H1 (cell line): ENCODE measurements at regions of chr15 and their contacts with region 1.

Region 1: DNA sequence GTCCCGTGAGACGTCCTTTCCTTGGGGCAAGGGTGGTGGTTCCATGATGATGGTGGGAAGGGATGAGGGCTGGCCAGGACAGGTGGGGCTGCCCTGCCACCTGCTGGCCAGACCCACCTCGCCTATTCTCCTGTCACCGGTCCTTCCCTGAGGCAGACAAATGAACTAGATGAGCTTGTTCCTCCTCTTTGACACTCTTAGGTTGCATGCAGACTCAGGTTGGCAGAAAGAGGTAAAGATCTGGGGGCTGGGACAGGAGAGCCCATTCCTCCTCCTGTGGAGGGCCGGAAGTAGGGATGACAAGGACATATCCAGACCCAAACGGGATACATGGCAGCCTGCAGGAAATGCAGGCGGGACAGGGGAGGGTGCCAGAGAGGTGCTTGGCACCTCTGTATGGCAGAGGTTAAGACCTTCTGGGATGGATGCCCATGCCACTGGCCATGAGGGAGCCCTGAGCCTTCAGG is 38.6 kb downstream of the ACSBG1 start:
- DNase-seq: peak in 1 of 2 experiments; percentile 61
- H3K4me3 ChIP-seq: no peak overlapping the region
- H3K27ac ChIP-seq: no peak overlapping the region
- H3K4me1 ChIP-seq: no peaks in the 10 kb centered on the region
- H3K27me3 ChIP-seq: no peaks in the 10 kb centered on the region
- CTCF ChIP-seq: peak; percentile 87 to 93 (median 90)
- EP300 ChIP-seq: no peak
- POLR2A ChIP-seq: no peak
- RAD21 ChIP-seq: peak; percentile 86 to 87

Region 2: DNA sequence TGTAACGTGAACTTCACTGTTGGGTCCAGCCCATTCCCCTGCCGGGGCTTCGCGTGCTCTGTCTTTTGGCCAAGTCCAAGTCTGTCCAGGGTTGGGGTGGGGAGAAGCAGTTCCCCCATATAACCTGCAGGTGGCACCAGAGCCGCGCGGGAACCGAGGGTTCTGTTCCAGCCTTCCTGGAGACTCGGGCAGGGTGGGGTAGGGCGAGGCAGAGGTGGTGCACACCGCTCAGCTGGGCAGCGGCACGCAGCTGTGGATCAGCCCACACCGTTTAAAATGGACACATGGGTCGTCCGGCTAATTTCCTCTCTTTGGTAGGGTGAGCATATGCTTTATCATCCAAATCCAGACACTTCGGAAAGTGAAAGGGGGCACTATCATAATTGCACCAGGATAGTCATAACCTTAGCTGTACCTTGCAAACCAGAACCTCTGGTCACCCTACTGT is 236.3 kb before region 1 on chr15:
- CTCF ChIA-PET with region 1: interaction called, 10 read pairs
- POLR2A ChIA-PET with region 1: no interaction called
- DNase-seq: peak; percentile 58 to 99
- H3K4me3 ChIP-seq: no peak overlapping the region
- H3K27ac ChIP-seq: no peak overlapping the region
- H3K4me1 ChIP-seq: peaks cover 0 to 5% (median 1%) of the 10 kb centered on the region in 4 experiments; a peak in 4 of 7 replicates
- H3K27me3 ChIP-seq: no peaks in the 10 kb centered on the region; a peak in 1 of 7 replicates
- CTCF ChIP-seq: peak; percentile 90 to 97 (median 97)
- EP300 ChIP-seq: no peak
- POLR2A ChIP-seq: no peak
- RAD21 ChIP-seq: peak; percentile 97 to 98

Region 3: GRCh38 chr15:78000091-78000926 is 195.5 kb before region 1 on chr15:
- CTCF ChIA-PET with region 1: interaction called, 16 read pairs
- POLR2A ChIA-PET with region 1: no interaction called
- DNase-seq: peak; percentile 85 to 96
- H3K4me3 ChIP-seq: no peak overlapping the region
- H3K27ac ChIP-seq: no peak overlapping the region
- H3K4me1 ChIP-seq: peaks cover 0 to 4% (median 0%) of the 10 kb centered on the region in 4 experiments; a peak in 2 of 7 replicates
- H3K27me3 ChIP-seq: no peaks in the 10 kb centered on the region
- CTCF ChIP-seq: peak; percentile 89 to 98 (median 93)
- EP300 ChIP-seq: peak in 1 of 2 experiments; percentile 46; a peak in 1 of 3 replicates
- POLR2A ChIP-seq: no peak
- RAD21 ChIP-seq: peak; percentile 97 to 98

Region 4: DNA sequence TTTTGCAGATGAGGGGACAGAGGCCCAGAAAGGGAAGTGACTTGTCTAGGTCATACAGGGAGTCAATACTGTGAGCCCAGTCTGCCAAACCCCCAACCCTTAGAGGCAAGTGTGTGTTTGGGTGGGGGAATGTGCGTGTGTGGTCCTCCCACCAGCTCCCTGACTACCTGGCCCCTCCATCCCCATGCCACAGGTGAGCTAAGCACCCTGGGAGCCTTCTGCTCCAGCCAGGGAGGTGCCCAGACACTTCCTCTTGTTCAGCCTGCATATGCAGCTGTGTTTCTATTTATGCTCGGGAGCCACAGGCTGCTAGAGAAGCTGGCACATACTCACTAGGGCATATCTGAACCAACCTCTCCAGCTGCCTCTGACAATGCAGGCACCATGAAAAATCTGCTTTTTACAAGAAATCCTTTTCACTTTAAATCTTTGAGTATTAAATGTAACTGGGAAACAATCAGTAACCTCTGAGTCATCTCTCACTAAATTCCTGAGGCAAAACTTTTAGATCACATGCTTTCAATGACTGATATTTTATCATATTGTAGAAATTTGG is 139.0 kb before region 1 on chr15:
- CTCF ChIA-PET with region 1: no interaction called
- POLR2A ChIA-PET with region 1: no interaction called
- DNase-seq: no peak
- H3K4me3 ChIP-seq: no peak overlapping the region
- H3K27ac ChIP-seq: no peak overlapping the region
- H3K4me1 ChIP-seq: peaks cover 1 to 11% (median 5%) of the 10 kb centered on the region in 4 experiments
- H3K27me3 ChIP-seq: no peaks in the 10 kb centered on the region
- CTCF ChIP-seq: no peak
- EP300 ChIP-seq: no peak
- POLR2A ChIP-seq: no peak
- RAD21 ChIP-seq: no peak

Region 5: GRCh38 chr15:78079288-78080082 is 116.3 kb before region 1 on chr15:
- CTCF ChIA-PET with region 1: no interaction called
- POLR2A ChIA-PET with region 1: no interaction called
- DNase-seq: no peak
- H3K4me3 ChIP-seq: no peak overlapping the region
- H3K27ac ChIP-seq: no peak overlapping the region
- H3K4me1 ChIP-seq: peaks cover 0 to 8% (median 3%) of the 10 kb centered on the region in 4 experiments; a peak in 4 of 7 replicates
- H3K27me3 ChIP-seq: no peaks in the 10 kb centered on the region
- CTCF ChIP-seq: no peak
- EP300 ChIP-seq: no peak
- POLR2A ChIP-seq: no peak
- RAD21 ChIP-seq: no peak

Region 6: GRCh38 chr15:78131295-78132061 is 64.3 kb before region 1 on chr15 and contains the start of gene CIB2:
- CTCF ChIA-PET with region 1: interaction called, 14 read pairs
- POLR2A ChIA-PET with region 1: no interaction called
- DNase-seq: peak in 1 of 2 experiments; percentile 91
- H3K4me3 ChIP-seq: peak within 1 kb of the TSS; percentile 66 to 81 (median 80)
- H3K27ac ChIP-seq: no peak within 1 kb of the TSS
- H3K4me1 ChIP-seq: peaks cover 0 to 21% (median 14%) of the 10 kb centered on the region in 4 experiments; a peak in 6 of 7 replicates
- H3K27me3 ChIP-seq: no peaks in the 10 kb centered on the region; a peak in 1 of 7 replicates
- CTCF ChIP-seq: peak; percentile 48 to 82 (median 57)
- EP300 ChIP-seq: 0 out of 3 replicates have a peak, but pooled peaks of 1 of the 2 experiments have one; percentile 26
- POLR2A ChIP-seq: no peak; a peak in 1 of 3 replicates
- RAD21 ChIP-seq: peak; percentile 55 to 69
- total RNA-seq, gene CIB2: 45.8 and 46.8 TPM in 2 replicates

Region 7: GRCh38 chr15:78212546-78213424 is 17.0 kb after region 1 on chr15:
- CTCF ChIA-PET with region 1: interaction called, 89 read pairs
- POLR2A ChIA-PET with region 1: interaction called, 3 read pairs
- DNase-seq: peak in 1 of 2 experiments; percentile 35
- H3K4me3 ChIP-seq: no peak overlapping the region
- H3K27ac ChIP-seq: no peak overlapping the region
- H3K4me1 ChIP-seq: peaks cover 0 to 2% (median 0%) of the 10 kb centered on the region in 4 experiments; a peak in 2 of 7 replicates
- H3K27me3 ChIP-seq: no peaks in the 10 kb centered on the region
- CTCF ChIP-seq: no peak
- EP300 ChIP-seq: no peak
- POLR2A ChIP-seq: no peak
- RAD21 ChIP-seq: no peak

Region 8: DNA sequence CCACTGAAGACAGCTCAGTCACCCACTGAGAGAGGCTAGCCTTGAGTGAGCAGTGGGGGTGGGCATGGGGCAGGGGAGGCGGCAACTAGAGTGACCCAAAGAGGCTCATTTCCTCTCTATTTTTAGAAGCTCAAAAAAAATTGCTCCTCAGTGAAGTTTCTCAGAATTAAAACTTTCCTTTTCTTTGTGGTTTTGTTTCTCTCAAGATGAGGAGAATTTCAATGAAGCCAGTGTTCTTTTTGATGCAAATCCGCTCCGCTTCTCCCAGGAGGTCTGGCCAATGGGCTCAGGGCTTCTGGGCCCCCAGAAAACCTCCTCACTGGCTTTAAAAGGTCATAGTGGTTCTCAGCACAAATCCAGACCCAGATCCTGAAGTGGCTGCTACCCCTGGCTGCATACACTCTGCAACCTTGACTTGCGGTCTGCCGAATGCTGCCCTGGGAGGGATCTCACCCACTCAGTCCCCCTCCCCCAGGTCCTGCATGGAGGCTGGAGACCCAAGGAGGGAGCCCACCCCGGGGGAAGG is 38.8 kb after region 1 on chr15 and contains the start of gene ACSBG1:
- CTCF ChIA-PET with region 1: interaction called, 96 read pairs
- POLR2A ChIA-PET with region 1: no interaction called
- DNase-seq: no peak
- H3K4me3 ChIP-seq: peak within 1 kb of the TSS in 2 of 4 experiments; percentile 0 to 9; a peak in 1 of 8 replicates
- H3K27ac ChIP-seq: no peak within 1 kb of the TSS; the same call in 1 of the 2 replicates
- H3K4me1 ChIP-seq: peaks cover 6 to 16% (median 14%) of the 10 kb centered on the region in 4 experiments
- H3K27me3 ChIP-seq: no peaks in the 10 kb centered on the region
- CTCF ChIP-seq: no peak
- EP300 ChIP-seq: no peak
- POLR2A ChIP-seq: no peak
- RAD21 ChIP-seq: no peak
- total RNA-seq, gene ACSBG1: 6.1 and 7.1 TPM in 2 replicates

Region 9: DNA sequence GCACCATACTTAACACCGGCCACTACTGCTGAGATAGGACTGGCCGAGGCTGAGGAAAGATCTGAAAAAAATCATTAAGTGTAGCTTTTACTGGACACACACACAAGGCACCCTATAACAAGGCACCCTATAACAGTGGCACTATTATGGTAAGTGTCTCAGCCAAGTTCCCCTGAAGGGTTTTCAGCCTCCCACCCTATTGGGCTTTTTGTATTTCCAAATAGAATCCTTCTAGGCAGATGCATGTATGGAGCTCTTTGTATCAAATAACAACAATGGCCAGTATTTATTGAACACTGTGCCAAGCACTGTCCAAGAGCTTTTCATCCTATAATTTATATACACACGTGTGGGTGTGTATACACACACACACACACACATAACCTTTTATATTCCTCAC is 61.9 kb after region 1 on chr15:
- CTCF ChIA-PET with region 1: interaction called, 10 read pairs
- POLR2A ChIA-PET with region 1: no interaction called
- DNase-seq: no peak
- H3K4me3 ChIP-seq: no peak overlapping the region
- H3K27ac ChIP-seq: no peak overlapping the region
- H3K4me1 ChIP-seq: no peaks in the 10 kb centered on the region
- H3K27me3 ChIP-seq: no peaks in the 10 kb centered on the region; a peak in 1 of 7 replicates
- CTCF ChIP-seq: no peak
- EP300 ChIP-seq: no peak
- POLR2A ChIP-seq: no peak
- RAD21 ChIP-seq: no peak